A549 (cell line): ENCODE measurements at regions of chr19 and their contacts with region 1.

Region 1: GRCh38 chr19:53867225-53868090 is at the start of gene MYADM:
- DNase-seq: peak; percentile 99 to 100
- ATAC-seq: peak; percentile 48 to 57
- H3K4me3 ChIP-seq: peak within 1 kb of the TSS; percentile 69
- H3K27ac ChIP-seq: peak within 1 kb of the TSS; percentile 94
- H3K4me1 ChIP-seq: peaks cover 34% of the 10 kb centered on the region
- CTCF ChIP-seq: no peak
- EP300 ChIP-seq: peak in 1 of 2 experiments; percentile 57; a peak in 1 of 5 replicates
- POLR2A ChIP-seq: peak; percentile 66
- RAD21 ChIP-seq: no peak
- polyA plus RNA-seq, gene MYADM: 37.7 and 56.1 TPM in 2 replicates

Region 2: DNA sequence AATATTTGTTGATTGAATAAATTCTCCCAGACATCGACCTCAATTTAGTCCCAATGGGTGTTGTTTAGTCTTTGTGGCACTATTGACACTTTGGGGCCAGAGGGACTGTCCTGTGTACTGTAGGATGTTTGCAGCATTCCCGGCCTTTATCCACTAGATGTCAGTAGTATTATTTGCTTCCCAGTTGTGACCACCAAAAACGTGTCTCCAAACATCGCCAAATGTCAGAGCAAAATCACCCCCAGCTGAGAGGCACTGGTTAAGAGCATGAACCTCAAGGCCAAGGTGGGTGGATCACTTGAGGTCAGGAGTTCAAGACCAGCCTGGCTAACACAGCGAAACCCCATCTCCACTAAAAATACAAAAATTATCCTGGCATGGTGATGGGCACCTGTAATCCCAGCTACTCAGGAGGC is 58.7 kb before region 1 on chr19:
- CTCF ChIA-PET with region 1: no interaction called
- POLR2A ChIA-PET with region 1: no interaction called
- DNase-seq: peak; percentile 52 to 85
- ATAC-seq: peak; percentile 87 to 91
- H3K4me3 ChIP-seq: no peak overlapping the region
- H3K27ac ChIP-seq: no peak overlapping the region
- H3K4me1 ChIP-seq: no peaks in the 10 kb centered on the region
- CTCF ChIP-seq: peak; percentile 86
- EP300 ChIP-seq: no peak
- POLR2A ChIP-seq: no peak
- RAD21 ChIP-seq: peak; percentile 88 to 98

Region 3: DNA sequence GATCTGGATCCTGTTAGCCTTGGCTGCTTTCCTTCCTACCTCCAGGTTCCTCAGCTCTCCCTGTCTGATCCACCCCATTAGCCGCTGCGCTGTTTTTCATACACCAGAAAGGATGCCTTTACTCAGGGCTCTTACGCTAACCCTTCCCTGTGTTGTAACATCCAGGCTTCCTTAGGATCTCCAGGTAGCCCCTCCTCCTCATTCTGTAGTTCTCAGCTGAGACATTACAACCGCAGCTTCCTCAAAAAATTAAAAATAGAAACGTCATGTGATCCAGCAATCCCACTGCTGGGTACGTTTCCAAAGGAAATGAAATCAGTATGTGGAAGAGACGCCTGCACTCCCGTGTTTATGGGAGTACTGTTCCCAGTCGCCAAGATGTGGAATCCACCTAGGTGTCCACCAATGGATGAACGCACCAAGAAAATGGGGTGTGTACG is 18.2 kb before region 1 on chr19:
- CTCF ChIA-PET with region 1: interaction called, 27 read pairs
- POLR2A ChIA-PET with region 1: interaction called, 11 read pairs
- DNase-seq: no peak
- ATAC-seq: no peak
- H3K4me3 ChIP-seq: no peak overlapping the region
- H3K27ac ChIP-seq: no peak overlapping the region
- H3K4me1 ChIP-seq: peaks cover 8% of the 10 kb centered on the region; the same call in 2 of the 3 replicates
- CTCF ChIP-seq: no peak
- EP300 ChIP-seq: no peak
- POLR2A ChIP-seq: no peak
- RAD21 ChIP-seq: no peak

Region 4: DNA sequence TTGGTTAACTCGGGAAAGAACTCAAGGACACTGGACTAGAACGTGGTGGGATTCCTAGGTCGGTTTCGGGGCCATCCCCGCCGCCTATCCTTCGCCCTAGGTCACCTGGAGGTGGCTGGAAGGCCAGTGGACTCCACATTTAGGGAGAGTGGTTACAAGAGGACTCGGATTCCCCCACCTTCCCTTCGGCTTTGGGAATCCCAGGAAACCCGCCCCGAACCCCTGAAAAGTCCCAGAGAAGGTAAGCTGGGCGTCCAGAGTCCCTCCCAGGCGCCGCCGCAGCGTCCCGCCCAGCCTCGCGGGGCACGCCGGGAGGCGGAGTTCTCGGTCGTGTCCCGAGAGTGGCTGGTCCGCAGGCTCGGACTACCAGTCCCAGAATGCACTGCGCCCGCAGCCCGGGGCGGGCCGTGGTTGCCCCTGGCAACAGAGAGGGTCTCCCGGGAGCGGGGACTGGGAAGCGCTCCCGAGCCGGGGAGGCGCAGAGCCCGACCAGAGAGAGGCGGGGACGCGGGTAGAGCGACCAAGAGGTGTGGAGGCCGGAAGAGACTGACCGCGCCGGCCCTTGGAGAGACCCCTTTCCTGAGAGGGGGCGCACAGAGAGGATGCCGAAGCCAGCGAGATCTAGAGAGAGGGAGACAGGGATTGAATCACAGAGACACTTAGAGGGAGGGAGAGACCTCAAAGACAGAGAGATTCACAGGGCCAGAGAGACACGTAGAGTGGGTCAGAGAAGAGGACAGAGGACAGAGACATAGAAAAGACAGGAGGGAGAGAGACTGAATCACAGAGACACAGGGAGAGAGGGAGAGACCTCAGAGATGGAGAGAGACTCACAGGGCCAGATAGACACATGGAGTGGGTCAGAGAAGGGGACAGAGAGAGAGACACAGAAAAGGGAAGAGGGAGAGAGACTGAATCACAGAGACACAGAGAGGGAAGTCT is 12.0 kb after region 1 on chr19:
- CTCF ChIA-PET with region 1: interaction called, 21 read pairs
- POLR2A ChIA-PET with region 1: interaction called, 23 read pairs
- DNase-seq: peak; percentile 92 to 93
- ATAC-seq: peak; percentile 64 to 78
- H3K4me3 ChIP-seq: peak overlapping the region; percentile 44
- H3K27ac ChIP-seq: peak overlapping the region; percentile 72 to 89
- H3K4me1 ChIP-seq: peaks cover 21% of the 10 kb centered on the region
- CTCF ChIP-seq: no peak
- EP300 ChIP-seq: no peak
- POLR2A ChIP-seq: no peak
- RAD21 ChIP-seq: no peak

Region 5: DNA sequence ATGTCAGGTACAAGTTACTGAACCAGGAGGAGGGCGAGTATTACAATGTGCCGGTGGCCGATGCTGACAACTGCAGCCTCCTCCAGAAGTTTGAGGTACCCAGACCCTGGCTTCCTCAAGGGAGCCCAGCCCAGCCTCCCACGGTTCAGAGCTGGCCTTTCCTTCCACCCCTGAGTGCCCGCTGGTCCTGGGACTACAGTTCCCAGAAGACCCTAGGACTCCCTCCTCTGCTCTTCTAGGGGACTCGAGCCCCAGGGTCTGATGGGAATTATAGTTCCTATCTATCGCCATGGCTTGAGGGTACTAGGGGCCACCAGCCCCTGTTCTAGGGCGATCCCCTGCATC is 25.5 kb after region 1 on chr19:
- CTCF ChIA-PET with region 1: interaction called, 3 read pairs
- POLR2A ChIA-PET with region 1: interaction called, 14 read pairs
- DNase-seq: peak in 1 of 2 experiments; percentile 56
- ATAC-seq: peak; percentile 39 to 52; a peak in 5 of 6 replicates
- H3K4me3 ChIP-seq: no peak overlapping the region
- H3K27ac ChIP-seq: no peak overlapping the region
- H3K4me1 ChIP-seq: peaks cover 14% of the 10 kb centered on the region
- CTCF ChIP-seq: no peak
- EP300 ChIP-seq: no peak
- POLR2A ChIP-seq: no peak
- RAD21 ChIP-seq: no peak

Region 6: GRCh38 chr19:53953383-53953782 is 85.9 kb after region 1 on chr19:
- CTCF ChIA-PET with region 1: no interaction called
- POLR2A ChIA-PET with region 1: no interaction called
- DNase-seq: no peak
- ATAC-seq: no peak
- H3K4me3 ChIP-seq: no peak overlapping the region
- H3K27ac ChIP-seq: no peak overlapping the region
- H3K4me1 ChIP-seq: no peaks in the 10 kb centered on the region
- CTCF ChIP-seq: no peak
- EP300 ChIP-seq: no peak
- POLR2A ChIP-seq: no peak
- RAD21 ChIP-seq: no peak

Region 7: GRCh38 chr19:54106716-54107115 is 239.3 kb after region 1 on chr19:
- CTCF ChIA-PET with region 1: no interaction called
- POLR2A ChIA-PET with region 1: no interaction called
- DNase-seq: no peak
- ATAC-seq: no peak
- H3K4me3 ChIP-seq: no peak overlapping the region
- H3K27ac ChIP-seq: no peak overlapping the region
- H3K4me1 ChIP-seq: 0 out of 3 replicates have a peak, but pooled peaks cover 8% of the 10 kb centered on the region
- CTCF ChIP-seq: no peak
- EP300 ChIP-seq: no peak
- POLR2A ChIP-seq: no peak
- RAD21 ChIP-seq: no peak